WTC11 (cell line): ENCODE measurements at regions of chr12 and their contacts with region 1.

Region 1: GRCh38 chr12:108129017-108129812 is at the start of gene WSCD2:
- DNase-seq: peak; percentile 90
- ATAC-seq: peak; percentile 90
- H3K4me3 Mint-ChIP-seq: peak within 1 kb of the TSS; percentile 69
- H3K27ac Mint-ChIP-seq: no peak within 1 kb of the TSS
- H3K4me1 Mint-ChIP-seq: peaks cover 25% of the 10 kb centered on the region
- H3K27me3 Mint-ChIP-seq: peaks cover 28% of the 10 kb centered on the region
- CTCF ChIP-seq: no peak
- total RNA-seq, gene WSCD2: 1.1 to 1.6 TPM (median 1.6 TPM) in 3 replicates

Region 2: DNA sequence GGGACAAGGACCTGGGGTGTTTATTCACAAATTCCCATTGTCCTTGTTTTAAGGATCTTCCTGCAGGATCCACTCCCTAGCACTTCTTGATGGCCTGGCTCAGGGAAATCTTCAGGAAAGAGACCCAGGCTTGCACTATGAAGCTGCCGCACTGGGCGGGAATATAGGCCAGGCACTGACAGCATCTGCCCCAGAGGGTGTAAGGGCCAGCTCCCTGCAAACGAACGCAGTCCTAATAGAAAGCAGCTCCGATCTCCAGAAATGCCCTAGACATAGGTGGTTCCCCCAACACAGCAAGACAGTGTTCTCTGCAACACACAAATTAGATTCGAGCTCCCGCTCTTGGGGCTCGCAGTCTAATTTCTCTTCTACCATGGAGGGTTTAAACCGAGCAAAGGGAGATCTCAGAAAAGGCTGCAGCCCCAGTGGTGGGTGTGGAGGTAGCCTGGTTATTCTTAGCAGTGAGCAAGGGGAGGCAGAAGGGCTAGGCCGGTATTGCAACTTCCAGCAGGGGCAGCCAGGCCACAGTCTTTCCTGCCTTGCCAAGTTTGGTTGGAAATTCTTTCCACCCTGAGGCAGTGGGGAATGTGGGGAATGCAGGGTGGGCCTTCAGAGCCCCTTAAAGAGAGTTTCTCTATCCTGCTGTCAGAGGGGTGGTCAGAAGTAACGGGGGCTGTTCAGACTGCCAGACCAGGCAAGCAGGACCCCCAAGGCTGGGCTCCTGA is 16.2 kb before region 1 on chr12:
- CTCF ChIA-PET with region 1: interaction called, 18 read pairs
- POLR2A ChIA-PET with region 1: no interaction called
- DNase-seq: peak; percentile 59
- ATAC-seq: peak; percentile 95
- H3K4me3 Mint-ChIP-seq: no peak overlapping the region
- H3K27ac Mint-ChIP-seq: peak overlapping the region; percentile 95
- H3K4me1 Mint-ChIP-seq: peaks cover 57% of the 10 kb centered on the region
- H3K27me3 Mint-ChIP-seq: no peaks in the 10 kb centered on the region
- CTCF ChIP-seq: no peak

Region 3: DNA sequence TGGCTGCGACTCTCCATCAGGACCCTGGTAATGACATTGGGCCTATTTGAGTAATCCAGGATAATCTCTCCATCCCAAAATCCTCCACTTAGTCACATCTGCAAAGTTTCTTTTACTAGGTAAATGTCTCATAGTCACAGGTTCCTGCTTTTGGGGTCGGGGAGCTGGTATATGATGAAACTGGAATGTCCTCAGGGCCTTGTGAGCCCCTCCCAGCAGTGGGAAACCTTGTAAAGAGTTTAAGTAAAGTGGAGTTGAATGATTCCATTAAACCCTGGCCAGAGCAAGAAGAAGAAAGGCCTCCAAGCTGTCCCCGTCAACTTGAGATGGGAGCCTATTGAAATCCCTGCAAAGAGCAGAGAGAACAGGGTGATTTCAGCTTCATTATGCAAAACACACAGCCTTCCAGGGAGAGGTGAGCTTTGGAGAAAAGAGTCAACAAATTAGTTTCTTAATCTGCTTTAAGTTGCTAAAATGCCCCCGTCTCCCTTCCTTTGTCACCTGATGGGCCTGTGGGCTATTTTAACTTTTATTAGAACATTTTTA is 12.5 kb after region 1 on chr12:
- CTCF ChIA-PET with region 1: interaction called, 15 read pairs
- POLR2A ChIA-PET with region 1: no interaction called
- DNase-seq: no peak
- ATAC-seq: peak; percentile 65
- H3K4me3 Mint-ChIP-seq: no peak overlapping the region
- H3K27ac Mint-ChIP-seq: peak overlapping the region; percentile 54
- H3K4me1 Mint-ChIP-seq: peaks cover 48% of the 10 kb centered on the region
- H3K27me3 Mint-ChIP-seq: no peaks in the 10 kb centered on the region
- CTCF ChIP-seq: no peak